Activated CD8-positive, alpha-beta memory T cell treated with anti-CD3 and anti-CD28 coated beads, Interleukin-2, amount 10 ng/mL, durations not matched to agents 7 days and 5 days (primary cell): ENCODE measurements at regions of chr6 and their contacts with region 1.

Region 1: GRCh38 chr6:117555882-117556498 is 46.3 kb downstream of the GOPC start:
- DNase-seq: peak; percentile 57
- ATAC-seq: no peak
- H3K4me3 Mint-ChIP-seq: no peak overlapping the region
- H3K27ac Mint-ChIP-seq: no peak overlapping the region
- H3K4me1 Mint-ChIP-seq: peaks cover 3% of the 10 kb centered on the region
- H3K27me3 Mint-ChIP-seq: peaks cover 4% of the 10 kb centered on the region

Region 2: GRCh38 chr6:117441824-117442264 is 114.1 kb before region 1 on chr6:
- CTCF ChIA-PET with region 1: interaction called, 12 read pairs
- DNase-seq: no peak
- ATAC-seq: no peak
- H3K4me3 Mint-ChIP-seq: no peak overlapping the region
- H3K27ac Mint-ChIP-seq: no peak overlapping the region
- H3K4me1 Mint-ChIP-seq: no peaks in the 10 kb centered on the region
- H3K27me3 Mint-ChIP-seq: peaks cover 40% of the 10 kb centered on the region

Region 3: GRCh38 chr6:117498159-117498558 is 57.8 kb before region 1 on chr6:
- CTCF ChIA-PET with region 1: no interaction called
- DNase-seq: no peak
- ATAC-seq: no peak
- H3K4me3 Mint-ChIP-seq: no peak overlapping the region
- H3K27ac Mint-ChIP-seq: peak overlapping the region; percentile 5
- H3K4me1 Mint-ChIP-seq: peaks cover 17% of the 10 kb centered on the region
- H3K27me3 Mint-ChIP-seq: no peaks in the 10 kb centered on the region